ENCODE measurements at regions of chrX and their contacts with region 1.

Region 1: DNA sequence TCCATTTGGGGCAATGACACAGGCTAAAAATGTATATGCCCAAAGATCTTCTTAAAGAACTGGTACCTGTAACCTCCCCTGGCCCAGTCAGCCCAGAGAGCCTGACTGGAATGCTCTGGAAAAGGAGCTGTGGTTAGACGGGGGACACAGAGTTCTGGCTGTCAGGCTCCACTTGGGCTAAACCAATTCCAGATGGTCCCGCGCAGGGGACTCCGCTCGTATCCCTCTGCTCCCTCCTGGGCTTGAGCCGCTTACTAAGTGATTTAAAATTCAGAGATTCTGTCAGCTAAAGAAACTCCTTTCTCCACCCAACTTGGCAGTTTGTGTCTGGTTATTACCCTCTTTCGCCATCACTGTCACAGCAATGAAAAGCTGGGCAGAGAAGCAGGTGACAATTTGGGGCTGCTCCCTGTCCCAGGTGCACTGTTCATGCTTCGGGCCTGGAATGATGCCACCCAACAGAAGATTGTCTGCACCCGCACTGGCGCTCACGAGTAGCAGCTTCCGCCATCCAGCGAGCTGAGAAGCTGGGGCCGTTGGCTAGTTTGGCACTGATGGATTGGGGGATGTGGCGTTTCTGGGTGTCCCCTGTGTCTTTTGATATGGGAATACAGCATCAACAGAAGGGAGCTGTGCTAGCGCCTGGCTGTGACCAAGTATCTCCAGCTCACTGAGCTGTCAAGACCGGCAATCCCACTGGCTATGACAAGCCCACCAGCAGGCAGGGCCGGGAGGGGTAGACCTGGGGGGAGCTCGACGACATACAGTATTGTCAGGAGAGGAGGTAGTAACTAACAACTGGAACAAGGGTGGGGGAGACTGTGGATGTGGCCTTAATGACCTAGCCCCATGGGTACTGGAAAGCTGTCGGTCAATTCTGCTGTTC is 6.7 kb upstream of the IRAK1 start:
- DNase-seq: no peak
- ATAC-seq: no peak
- H3K4me3 Mint-ChIP-seq: no peak overlapping the region
- H3K27ac Mint-ChIP-seq: no peak overlapping the region
- H3K4me1 Mint-ChIP-seq: peaks cover 1% of the 10 kb centered on the region
- H3K27me3 Mint-ChIP-seq: no peaks in the 10 kb centered on the region
- CTCF ChIP-seq: no peak

Region 2: DNA sequence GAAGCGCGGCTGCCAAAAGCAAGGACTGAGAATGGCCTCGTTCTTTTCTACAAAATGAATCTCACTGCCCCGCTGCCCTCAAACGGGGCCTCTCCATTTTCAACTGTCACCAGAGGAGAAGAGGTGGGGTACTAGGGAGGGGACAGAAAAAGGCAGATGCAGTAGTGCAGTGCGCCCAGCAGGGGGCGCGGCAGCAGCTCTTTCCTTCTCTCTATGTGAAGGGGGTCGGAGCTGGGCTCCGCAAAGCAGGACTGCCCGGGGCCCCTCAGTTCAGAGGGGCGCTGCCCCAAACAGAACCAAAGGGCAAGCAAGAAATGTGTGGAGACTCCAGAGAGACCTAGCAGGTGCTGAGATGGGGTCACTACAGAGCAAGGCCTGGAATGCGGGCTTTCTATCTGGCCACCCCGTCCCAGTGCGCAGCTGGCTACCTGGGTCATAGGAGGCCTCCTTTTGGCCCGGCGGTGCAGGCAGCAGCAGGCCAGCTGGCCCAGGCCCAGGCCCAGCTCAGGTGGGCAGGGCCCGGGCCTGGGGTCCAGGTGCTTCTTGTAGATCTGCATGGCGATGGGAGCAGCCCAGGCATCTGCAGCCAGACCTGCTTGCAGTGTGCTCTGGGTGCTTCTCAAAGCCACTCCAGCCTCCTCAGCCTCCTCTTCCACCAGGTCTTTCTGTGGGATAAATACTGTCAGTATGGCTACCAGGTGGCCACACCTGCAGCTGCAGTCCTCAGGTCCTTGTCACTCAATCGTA is 12.6 kb before region 1 on chrX:
- CTCF ChIA-PET with region 1: interaction called, 13 read pairs
- POLR2A ChIA-PET with region 1: interaction called, 7 read pairs
- intact Hi-C with region 1: no loop called
- DNase-seq: peak; percentile 50
- ATAC-seq: peak; percentile 88
- H3K4me3 Mint-ChIP-seq: no peak overlapping the region
- H3K27ac Mint-ChIP-seq: peak overlapping the region; percentile 46
- H3K4me1 Mint-ChIP-seq: peaks cover 18% of the 10 kb centered on the region
- H3K27me3 Mint-ChIP-seq: no peaks in the 10 kb centered on the region
- CTCF ChIP-seq: peak; percentile 88